ENCODE measurements at regions of chr13 and their contacts with region 1.

Region 1: DNA sequence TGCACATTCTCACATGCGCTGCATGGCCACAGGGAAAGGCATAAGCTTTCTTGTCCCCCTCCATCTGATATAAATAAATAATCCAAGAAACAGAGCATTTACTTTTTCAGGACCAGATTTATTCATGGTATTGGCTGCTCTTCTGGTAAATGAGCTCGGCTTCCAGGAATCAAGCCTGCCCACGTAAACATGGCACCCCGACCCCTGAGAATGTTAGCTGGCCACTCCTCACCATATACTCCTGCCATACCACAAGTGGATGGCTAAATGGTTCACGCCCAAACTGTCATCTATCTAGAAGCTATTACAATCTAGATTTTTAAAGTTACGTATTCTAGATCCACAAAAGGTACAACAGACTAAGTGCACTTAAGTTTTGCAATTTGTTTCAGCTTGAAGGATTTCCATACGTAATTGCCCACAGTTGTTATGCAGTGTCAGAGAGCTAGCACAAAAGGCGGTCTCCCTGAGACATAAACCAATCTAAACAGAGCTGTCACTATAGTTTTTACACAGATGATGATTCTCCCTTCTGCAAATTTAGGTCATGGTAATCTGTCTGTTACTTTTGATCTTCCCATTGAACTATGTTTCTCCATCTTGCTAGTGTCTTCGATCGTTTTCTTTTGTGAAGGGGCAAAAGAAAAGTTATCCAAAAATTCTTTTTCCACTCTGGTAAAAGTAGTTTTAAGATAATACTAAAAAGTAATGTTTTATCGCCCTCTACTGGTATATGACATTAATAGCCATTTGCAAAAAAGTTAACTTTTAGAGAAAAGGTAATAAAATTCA is 16.2 kb upstream of the FOXO1 start:
- DNase-seq: peak; percentile 63
- H3K4me3 ChIP-seq: no peak overlapping the region
- H3K27ac ChIP-seq: peak overlapping the region; percentile 73
- H3K4me1 ChIP-seq: peaks cover 22% of the 10 kb centered on the region
- H3K27me3 ChIP-seq: no peaks in the 10 kb centered on the region
- CTCF ChIP-seq: peak; percentile 11 to 21
- POLR2A ChIP-seq: no peak

Region 2: GRCh38 chr13:39684531-39685137 is 998.0 kb before region 1 on chr13:
- CTCF ChIA-PET with region 1: interaction called, 26 read pairs
- POLR2A ChIA-PET with region 1: no interaction called
- dilution Hi-C with region 1: no loop called
- intact Hi-C with region 1: loop called (anchors 1 kb)
- DNase-seq: peak; percentile 54
- H3K4me3 ChIP-seq: no peak overlapping the region
- H3K27ac ChIP-seq: no peak overlapping the region
- H3K4me1 ChIP-seq: no peaks in the 10 kb centered on the region
- H3K27me3 ChIP-seq: no peaks in the 10 kb centered on the region
- CTCF ChIP-seq: peak in 1 of 2 donors; percentile 8
- POLR2A ChIP-seq: no peak

Region 3: GRCh38 chr13:39815345-39816111 is 867.1 kb before region 1 on chr13:
- CTCF ChIA-PET with region 1: interaction called, 21 read pairs
- POLR2A ChIA-PET with region 1: no interaction called
- dilution Hi-C with region 1: no loop called
- intact Hi-C with region 1: no loop called
- DNase-seq: peak; percentile 79
- H3K4me3 ChIP-seq: no peak overlapping the region
- H3K27ac ChIP-seq: no peak overlapping the region
- H3K4me1 ChIP-seq: peaks cover 17% of the 10 kb centered on the region
- H3K27me3 ChIP-seq: no peaks in the 10 kb centered on the region
- CTCF ChIP-seq: peak; percentile 10 to 22
- POLR2A ChIP-seq: no peak

Region 4: DNA sequence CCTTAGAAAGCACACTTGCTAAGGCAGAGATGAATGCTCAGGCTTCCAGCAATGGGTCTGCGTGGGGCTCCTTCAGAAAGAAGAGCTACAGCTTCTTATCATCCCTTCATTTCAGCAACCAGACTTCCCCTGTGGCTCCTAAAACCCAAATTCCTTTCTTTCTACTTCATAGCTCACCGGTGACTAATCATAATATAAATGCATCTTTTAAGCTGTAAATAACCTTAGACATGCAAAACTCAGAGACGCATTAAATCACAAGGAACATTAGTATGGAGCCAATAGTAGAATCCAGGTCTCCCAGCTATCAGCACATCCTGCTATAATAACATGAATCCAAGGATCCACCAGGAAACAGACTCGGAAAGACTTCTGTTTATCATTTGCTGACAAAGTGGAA is 651.6 kb before region 1 on chr13:
- CTCF ChIA-PET with region 1: no interaction called
- POLR2A ChIA-PET with region 1: no interaction called
- dilution Hi-C with region 1: no loop called
- intact Hi-C with region 1: loop called (anchors 1 kb)
- DNase-seq: peak; percentile 84
- H3K4me3 ChIP-seq: no peak overlapping the region
- H3K27ac ChIP-seq: peak overlapping the region; percentile 95
- H3K4me1 ChIP-seq: peaks cover 19% of the 10 kb centered on the region
- H3K27me3 ChIP-seq: no peaks in the 10 kb centered on the region
- CTCF ChIP-seq: no peak
- POLR2A ChIP-seq: no peak

Region 5: DNA sequence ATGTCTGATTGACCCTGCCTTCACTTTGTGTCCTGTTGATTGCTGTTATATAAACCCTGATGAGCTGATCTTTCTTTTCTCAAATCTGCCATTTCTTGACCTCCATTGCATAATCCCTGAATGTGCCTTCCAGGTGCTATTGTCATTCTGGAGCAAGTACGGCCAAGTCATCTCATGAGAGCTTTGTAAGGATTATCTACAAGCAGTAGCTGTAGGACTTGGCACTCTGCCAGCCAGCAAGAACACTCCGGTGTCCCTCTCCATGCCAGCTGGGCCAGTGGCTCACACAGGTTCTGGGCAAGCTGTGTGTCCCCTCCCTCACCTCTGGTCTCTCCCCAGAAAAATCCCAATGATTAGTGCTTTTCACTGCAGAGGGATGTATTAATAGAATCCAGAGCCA is 364.3 kb before region 1 on chr13:
- CTCF ChIA-PET with region 1: no interaction called
- POLR2A ChIA-PET with region 1: no interaction called
- dilution Hi-C with region 1: no loop called
- intact Hi-C with region 1: loop called (anchors 1 kb)
- DNase-seq: peak; percentile 55
- H3K4me3 ChIP-seq: no peak overlapping the region
- H3K27ac ChIP-seq: no peak overlapping the region
- H3K4me1 ChIP-seq: peaks cover 16% of the 10 kb centered on the region
- H3K27me3 ChIP-seq: no peaks in the 10 kb centered on the region
- CTCF ChIP-seq: no peak
- POLR2A ChIP-seq: no peak

Region 6: GRCh38 chr13:40517486-40518480 is 164.9 kb before region 1 on chr13:
- CTCF ChIA-PET with region 1: no interaction called
- POLR2A ChIA-PET with region 1: no interaction called
- dilution Hi-C with region 1: no loop called
- intact Hi-C with region 1: no loop called
- DNase-seq: no peak
- H3K4me3 ChIP-seq: no peak overlapping the region
- H3K27ac ChIP-seq: no peak overlapping the region
- H3K4me1 ChIP-seq: peaks cover 4% of the 10 kb centered on the region
- H3K27me3 ChIP-seq: no peaks in the 10 kb centered on the region
- CTCF ChIP-seq: no peak
- POLR2A ChIP-seq: no peak

Region 7: GRCh38 chr13:40666045-40666904 is 16.4 kb before region 1 on chr13 and contains the start of gene FOXO1:
- CTCF ChIA-PET with region 1: interaction called, 30 read pairs
- POLR2A ChIA-PET with region 1: interaction called, 4 read pairs
- dilution Hi-C with region 1: no loop called
- intact Hi-C with region 1: no loop called
- DNase-seq: peak; percentile 79
- H3K4me3 ChIP-seq: peak within 1 kb of the TSS; percentile 67 to 95 (median 86)
- H3K27ac ChIP-seq: peak within 1 kb of the TSS; percentile 81
- H3K4me1 ChIP-seq: peaks cover 24% of the 10 kb centered on the region
- H3K27me3 ChIP-seq: no peaks in the 10 kb centered on the region
- CTCF ChIP-seq: no peak
- POLR2A ChIP-seq: peak; percentile 97
- total RNA-seq, gene FOXO1: 47.6 and 48.5 TPM in 2 replicates

Measured in endothelial cell of umbilical vein (primary cell).